ENCODE measurements at regions of chr12 and their contacts with region 1.

Region 1: DNA sequence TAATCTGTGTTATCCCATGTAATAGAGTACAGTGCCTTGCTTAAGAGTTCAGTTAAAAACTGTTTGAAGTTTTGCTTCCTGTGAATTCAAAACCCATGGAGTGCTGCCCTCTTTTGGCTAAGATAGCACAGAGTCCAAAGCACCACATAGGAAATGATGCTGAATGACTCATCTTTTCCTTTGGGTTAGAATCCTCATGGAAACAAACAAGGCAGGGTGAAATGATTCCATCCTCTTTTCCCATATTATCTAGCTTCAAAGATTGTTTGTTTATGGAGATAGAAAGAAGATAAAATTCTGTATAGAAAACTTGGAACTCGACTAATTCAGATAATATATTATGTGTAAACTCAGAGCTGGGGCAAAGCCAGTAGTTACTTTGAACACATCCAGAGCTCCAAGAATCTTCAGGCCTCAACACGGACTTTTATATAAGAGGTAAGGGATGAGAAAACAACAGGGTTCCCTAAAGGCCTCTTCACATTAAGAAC is 87.4 kb downstream of the OTOGL start:
- DNase-seq: peak in 1 of 2 donors; percentile 83
- ATAC-seq: peak; percentile 90 to 97 (median 95)
- H3K4me3 ChIP-seq: peak overlapping the region in 1 of 10 donors; percentile 1
- H3K27ac ChIP-seq: peak overlapping the region; percentile 36 to 92 (median 87)
- H3K4me1 ChIP-seq: peaks cover 2 to 42% (median 27%) of the 10 kb centered on the region in 9 donors
- H3K27me3 ChIP-seq: no peaks in the 10 kb centered on the region
- CTCF ChIP-seq: peak; percentile 42 to 90 (median 78)

Region 2: GRCh38 chr12:78229591-78230101 is 1957.1 kb before region 1 on chr12:
- intact Hi-C with region 1: no loop called
- DNase-seq: no peak
- ATAC-seq: peak in 1 of 8 donors; percentile 12
- H3K4me3 ChIP-seq: no peak overlapping the region
- H3K27ac ChIP-seq: no peak overlapping the region
- H3K4me1 ChIP-seq: no peaks in the 10 kb centered on the region
- H3K27me3 ChIP-seq: no peaks in the 10 kb centered on the region
- CTCF ChIP-seq: peak in 7 of 9 donors; percentile 23 to 53 (median 33)

Region 3: DNA sequence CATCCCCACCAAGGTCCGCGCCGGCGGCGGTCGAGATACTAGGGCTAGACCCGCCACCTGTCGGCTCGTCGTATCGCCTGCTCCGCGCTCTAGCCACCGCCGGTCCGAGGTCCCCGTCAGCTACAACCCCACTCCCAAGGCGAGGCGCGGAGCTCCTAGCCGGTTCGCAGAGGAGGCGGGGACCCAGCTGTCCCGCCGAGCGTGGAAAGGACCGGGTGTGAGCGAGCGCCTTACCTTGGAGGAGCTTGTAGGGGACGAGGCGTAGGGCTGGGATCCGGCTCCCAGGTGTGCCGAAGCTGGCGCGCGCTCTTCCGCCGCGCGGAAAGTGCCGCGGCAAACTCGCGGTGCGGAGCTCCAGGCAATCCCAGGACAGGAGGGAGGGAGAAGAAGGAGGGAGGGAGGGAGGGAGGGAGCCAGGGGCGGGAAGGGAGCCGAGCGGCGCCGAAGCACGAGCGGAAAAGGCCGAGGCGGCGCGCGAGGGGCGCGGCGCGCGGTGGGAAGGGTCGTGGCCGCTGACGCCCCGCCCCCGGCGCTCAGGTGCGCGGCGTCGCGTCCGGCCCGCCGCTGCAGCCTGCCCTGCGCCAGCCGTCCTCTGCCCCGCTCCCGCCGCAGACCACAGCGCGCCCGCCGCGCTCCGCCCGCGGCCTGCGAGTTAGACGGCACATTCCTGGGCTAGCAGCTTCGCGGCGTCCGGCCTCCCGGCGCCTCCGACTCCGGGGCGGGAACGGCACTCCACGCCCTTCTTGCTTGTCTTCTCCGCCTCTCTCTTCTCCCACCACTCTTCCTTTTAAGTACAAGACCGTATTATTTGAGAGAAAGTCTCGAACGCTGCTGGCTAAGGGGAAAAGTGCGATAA is 495.9 kb before region 1 on chr12 and contains the start of gene PAWR:
- intact Hi-C with region 1: loop called in 2 of 10 experiments (anchors 5 to 10 kb)
- DNase-seq: peak; percentile 22 to 53
- ATAC-seq: peak; percentile 51 to 85 (median 63)
- H3K4me3 ChIP-seq: peak within 1 kb of the TSS; percentile 68 to 92 (median 86)
- H3K27ac ChIP-seq: peak within 1 kb of the TSS in 9 of 10 donors; percentile 53 to 80 (median 73)
- H3K4me1 ChIP-seq: peaks cover 0 to 31% (median 8%) of the 10 kb centered on the region in 9 donors
- H3K27me3 ChIP-seq: peaks cover 0 to 45% (median 7%) of the 10 kb centered on the region in 7 donors
- CTCF ChIP-seq: peak in 4 of 9 donors; percentile 12 to 44 (median 22)
- total RNA-seq, gene PAWR: 3.5 to 16.6 (median 10.2) TPM

Region 4: GRCh38 chr12:79776111-79776510 is 410.7 kb before region 1 on chr12:
- intact Hi-C with region 1: loop called in 2 of 10 experiments (anchors 10 kb)
- DNase-seq: no peak
- ATAC-seq: peak in 1 of 8 donors; percentile 38
- H3K4me3 ChIP-seq: no peak overlapping the region
- H3K27ac ChIP-seq: peak overlapping the region in 6 of 10 donors; percentile 5 to 51 (median 26)
- H3K4me1 ChIP-seq: peaks cover 0 to 24% (median 13%) of the 10 kb centered on the region in 9 donors
- H3K27me3 ChIP-seq: no peaks in the 10 kb centered on the region
- CTCF ChIP-seq: no peak

Region 5: DNA sequence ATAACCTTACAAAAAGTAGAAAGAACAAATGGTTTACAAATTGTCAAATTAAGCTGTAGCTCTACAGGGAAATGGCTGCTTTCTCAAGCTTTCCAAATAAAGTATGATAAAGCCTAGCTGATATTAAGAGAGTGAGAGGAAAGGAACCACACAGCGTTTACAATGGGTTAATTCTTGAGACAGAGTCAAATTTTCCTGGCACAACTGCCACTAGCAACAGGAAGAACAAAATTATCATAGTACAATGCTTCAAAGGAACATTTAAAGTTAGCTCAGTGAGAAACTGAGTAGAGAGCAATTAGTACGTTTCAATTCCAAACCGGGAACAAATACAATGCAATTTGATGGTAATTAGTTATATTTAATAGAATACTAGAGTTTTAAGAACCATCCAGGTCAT is 367.9 kb before region 1 on chr12:
- intact Hi-C with region 1: loop called in 2 of 10 experiments (anchors 10 kb)
- DNase-seq: peak in 1 of 2 donors; percentile 57
- ATAC-seq: peak; percentile 76 to 91 (median 88)
- H3K4me3 ChIP-seq: peak overlapping the region in 2 of 10 donors; percentile 11 to 27
- H3K27ac ChIP-seq: peak overlapping the region; percentile 16 to 86 (median 76)
- H3K4me1 ChIP-seq: peaks cover 0 to 48% (median 32%) of the 10 kb centered on the region in 9 donors
- H3K27me3 ChIP-seq: no peaks in the 10 kb centered on the region
- CTCF ChIP-seq: no peak

Region 6: DNA sequence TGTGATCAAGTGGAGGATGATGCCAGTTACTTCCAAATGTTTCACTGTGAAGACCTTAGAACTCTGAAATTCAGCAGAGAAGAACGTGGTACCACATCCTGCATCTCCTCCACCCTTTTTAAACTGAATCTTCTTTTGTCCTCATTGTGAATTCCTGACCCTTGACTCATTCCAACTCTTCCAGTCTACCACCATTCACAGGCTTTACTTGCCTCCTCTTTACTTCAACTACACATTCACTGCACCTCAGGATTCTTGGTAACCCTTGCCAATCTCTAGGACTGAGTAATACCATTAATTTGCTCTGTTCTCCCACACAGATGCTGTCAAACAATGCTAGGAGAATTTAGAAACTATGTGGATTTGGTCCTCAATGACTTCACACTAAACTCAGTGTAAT is 289.2 kb before region 1 on chr12:
- intact Hi-C with region 1: loop called in 1 of 10 experiments (anchors 10 kb)
- DNase-seq: no peak
- ATAC-seq: peak in 1 of 8 donors; percentile 22
- H3K4me3 ChIP-seq: no peak overlapping the region
- H3K27ac ChIP-seq: no peak overlapping the region
- H3K4me1 ChIP-seq: peaks cover 5 to 86% (median 57%) of the 10 kb centered on the region in 9 donors
- H3K27me3 ChIP-seq: no peaks in the 10 kb centered on the region
- CTCF ChIP-seq: no peak

Region 7: GRCh38 chr12:80033448-80033847 is 153.3 kb before region 1 on chr12:
- intact Hi-C with region 1: loop called in 1 of 10 experiments (anchors 5 kb)
- DNase-seq: peak in 1 of 2 donors; percentile 9
- ATAC-seq: peak in 6 of 8 donors; percentile 46 to 72 (median 57)
- H3K4me3 ChIP-seq: no peak overlapping the region
- H3K27ac ChIP-seq: peak overlapping the region in 3 of 10 donors; percentile 13 to 23 (median 18)
- H3K4me1 ChIP-seq: peaks cover 0 to 11% (median 0%) of the 10 kb centered on the region in 9 donors
- H3K27me3 ChIP-seq: no peaks in the 10 kb centered on the region
- CTCF ChIP-seq: no peak

Region 8: GRCh38 chr12:80241576-80242273 is 55.0 kb after region 1 on chr12:
- intact Hi-C with region 1: no loop called
- DNase-seq: no peak
- ATAC-seq: no peak
- H3K4me3 ChIP-seq: no peak overlapping the region
- H3K27ac ChIP-seq: no peak overlapping the region
- H3K4me1 ChIP-seq: peaks cover 0 to 8% (median 0%) of the 10 kb centered on the region in 9 donors
- H3K27me3 ChIP-seq: no peaks in the 10 kb centered on the region
- CTCF ChIP-seq: no peak